Activated CD4-positive, alpha-beta memory T cell treated with anti-CD3 and anti-CD28 coated beads for 36 hours (primary cell): ENCODE measurements at regions of chr6 and their contacts with region 1.

Region 1: DNA sequence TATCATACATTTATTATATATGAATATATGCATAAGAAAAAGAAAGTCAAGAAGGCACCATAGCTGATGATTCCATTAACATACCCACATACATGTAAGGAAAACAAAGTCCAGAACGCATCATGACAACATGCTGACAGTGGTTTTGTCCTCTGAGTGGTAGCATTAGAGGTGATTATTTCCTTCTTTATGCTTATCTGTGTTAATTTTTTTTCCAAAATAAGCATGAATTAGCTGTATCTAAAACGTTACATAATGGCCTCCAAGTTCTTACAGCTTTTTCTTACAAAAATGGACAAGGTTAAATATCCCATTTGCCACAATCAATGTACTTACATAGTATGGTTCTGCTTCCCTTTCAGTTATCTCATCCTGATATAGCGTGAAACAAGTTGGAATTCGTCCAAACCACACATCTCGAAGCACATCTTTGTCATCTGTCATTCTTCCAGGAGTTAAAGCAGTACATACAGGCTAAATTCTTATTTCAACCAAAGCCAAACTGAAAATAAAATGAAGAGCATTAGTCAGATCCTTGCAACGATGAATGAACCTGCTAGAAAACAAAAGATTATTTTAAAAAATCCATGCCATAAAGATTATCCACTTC is 9.7 kb downstream of the ATG5 start:
- DNase-seq: no peak
- H3K4me3 Mint-ChIP-seq: no peak overlapping the region
- H3K27ac Mint-ChIP-seq: peak overlapping the region; percentile 73
- H3K4me1 Mint-ChIP-seq: peaks cover 63% of the 10 kb centered on the region
- H3K27me3 Mint-ChIP-seq: no peaks in the 10 kb centered on the region

Region 2: DNA sequence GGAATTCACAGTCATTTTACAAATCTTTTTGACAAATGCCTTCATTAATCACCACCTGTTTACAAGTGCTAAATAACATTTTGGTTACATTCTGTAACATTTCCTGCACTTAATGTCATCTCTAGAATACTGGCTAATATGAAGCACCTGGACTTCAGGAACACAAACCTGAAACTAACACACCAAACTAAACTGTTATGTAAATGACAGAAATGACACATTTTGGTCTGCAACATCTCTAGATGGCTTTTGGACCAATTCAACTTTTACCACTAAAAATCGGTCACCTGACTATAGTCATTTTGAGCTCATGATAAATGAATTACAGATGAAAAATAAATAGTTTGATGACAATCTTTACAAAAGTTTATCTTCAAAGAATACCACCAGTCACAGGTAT is 70.9 kb before region 1 on chr6:
- CTCF ChIA-PET with region 1: no interaction called
- POLR2A ChIA-PET with region 1: no interaction called
- intact Hi-C with region 1: loop called (anchors 5 kb)
- DNase-seq: no peak
- H3K4me3 Mint-ChIP-seq: no peak overlapping the region
- H3K27ac Mint-ChIP-seq: no peak overlapping the region
- H3K4me1 Mint-ChIP-seq: peaks cover 29% of the 10 kb centered on the region
- H3K27me3 Mint-ChIP-seq: no peaks in the 10 kb centered on the region